ENCODE measurements at regions of chr12 and their contacts with region 1.

Region 1: DNA sequence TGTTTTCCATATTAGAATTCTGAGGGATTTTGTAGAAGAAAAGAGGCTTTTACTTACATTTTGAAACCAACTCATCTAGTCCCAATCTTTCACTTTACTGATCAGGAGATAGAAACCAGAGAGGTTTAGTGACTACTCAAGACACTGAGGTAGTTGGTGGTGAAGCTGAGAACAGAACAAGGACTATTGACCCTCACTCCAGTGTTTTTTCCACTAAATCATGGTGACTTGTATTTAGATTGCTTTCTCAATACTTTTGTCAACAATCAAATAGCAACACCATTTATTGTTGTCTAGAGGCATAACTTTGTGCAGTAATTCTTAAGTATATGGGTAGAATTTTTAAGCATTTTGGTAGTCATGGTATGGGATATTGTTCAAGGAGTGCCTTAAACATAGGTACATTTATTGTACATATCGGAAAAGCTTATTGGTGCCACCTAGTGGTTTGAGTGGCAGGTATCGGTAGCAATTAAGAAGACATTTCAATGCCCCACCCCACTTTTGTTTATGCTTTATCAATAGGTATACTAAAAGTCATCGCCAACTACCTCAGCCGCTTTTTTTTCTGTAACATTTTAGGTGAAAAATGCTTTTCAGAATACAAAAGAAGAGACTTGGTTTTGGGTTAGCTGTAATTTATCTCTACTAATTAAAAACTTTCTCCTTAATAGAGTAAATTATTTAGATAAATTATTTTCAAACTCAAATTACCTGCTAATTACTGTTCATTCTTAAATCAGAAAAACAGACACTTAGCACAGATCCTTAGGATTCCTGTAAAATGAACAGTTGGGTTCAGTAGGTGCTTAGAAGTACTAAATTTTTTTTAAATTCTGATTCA is 47.3 kb upstream of the PAWR start:
- DNase-seq: no peak
- ATAC-seq: no peak
- H3K4me3 ChIP-seq: no peak overlapping the region
- H3K27ac ChIP-seq: no peak overlapping the region
- H3K4me1 ChIP-seq: no peaks in the 10 kb centered on the region
- H3K27me3 ChIP-seq: no peaks in the 10 kb centered on the region

Region 2: GRCh38 chr12:79407671-79408622 is 330.1 kb before region 1 on chr12:
- intact Hi-C with region 1: loop called (anchors 2 to 5 kb)
- DNase-seq: peak in 1 of 2 donors; percentile 50
- ATAC-seq: peak; percentile 86
- H3K4me3 ChIP-seq: no peak overlapping the region
- H3K27ac ChIP-seq: peak overlapping the region; percentile 57 to 90
- H3K4me1 ChIP-seq: peaks cover 2 to 3% of the 10 kb centered on the region in 2 donors
- H3K27me3 ChIP-seq: no peaks in the 10 kb centered on the region

Region 3: GRCh38 chr12:79811351-79811750 is 73.3 kb after region 1 on chr12:
- intact Hi-C with region 1: no loop called
- DNase-seq: no peak
- ATAC-seq: no peak
- H3K4me3 ChIP-seq: no peak overlapping the region
- H3K27ac ChIP-seq: no peak overlapping the region
- H3K4me1 ChIP-seq: peaks cover 0 to 2% of the 10 kb centered on the region in 2 donors
- H3K27me3 ChIP-seq: no peaks in the 10 kb centered on the region